ENCODE measurements at regions of chr14 and their contacts with region 1.

Region 1: DNA sequence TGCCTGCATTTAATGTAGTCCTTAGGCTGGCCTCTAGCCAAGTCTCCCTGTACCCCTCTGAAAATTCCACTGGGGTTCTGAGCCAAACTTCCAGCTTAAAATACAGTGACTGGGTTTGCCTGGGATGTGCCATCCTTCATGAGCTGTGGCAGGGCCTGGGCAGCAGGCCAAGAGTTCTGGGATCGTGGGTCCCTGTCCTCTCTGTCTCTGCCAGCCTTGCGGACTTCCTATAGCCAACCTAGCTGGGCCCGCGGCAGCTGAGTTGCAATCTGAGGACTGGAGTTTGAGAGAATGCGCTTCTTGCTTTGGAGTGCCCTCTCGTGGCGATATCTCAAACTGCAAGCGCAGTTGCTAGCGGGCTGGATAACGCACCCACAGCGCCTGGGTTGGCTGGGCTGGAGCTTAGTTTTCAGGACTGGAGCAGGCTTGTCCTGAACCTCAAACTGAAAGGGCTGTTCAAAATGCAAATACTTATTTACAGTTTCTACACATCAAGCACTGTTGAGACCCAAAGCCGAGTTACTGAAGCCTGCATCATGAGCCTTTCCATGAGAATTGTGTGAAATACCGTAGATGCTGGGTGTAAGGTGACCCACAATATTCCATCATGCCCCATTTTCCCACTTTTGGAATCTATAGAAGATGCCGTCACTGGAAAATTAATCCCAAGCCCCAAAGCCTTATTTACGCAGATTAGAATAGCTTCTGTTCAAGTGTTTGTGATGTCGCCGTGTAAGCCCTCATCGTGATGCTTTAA is 7.3 kb upstream of the IFI27L2 start:
- DNase-seq: peak; percentile 92

Region 2: DNA sequence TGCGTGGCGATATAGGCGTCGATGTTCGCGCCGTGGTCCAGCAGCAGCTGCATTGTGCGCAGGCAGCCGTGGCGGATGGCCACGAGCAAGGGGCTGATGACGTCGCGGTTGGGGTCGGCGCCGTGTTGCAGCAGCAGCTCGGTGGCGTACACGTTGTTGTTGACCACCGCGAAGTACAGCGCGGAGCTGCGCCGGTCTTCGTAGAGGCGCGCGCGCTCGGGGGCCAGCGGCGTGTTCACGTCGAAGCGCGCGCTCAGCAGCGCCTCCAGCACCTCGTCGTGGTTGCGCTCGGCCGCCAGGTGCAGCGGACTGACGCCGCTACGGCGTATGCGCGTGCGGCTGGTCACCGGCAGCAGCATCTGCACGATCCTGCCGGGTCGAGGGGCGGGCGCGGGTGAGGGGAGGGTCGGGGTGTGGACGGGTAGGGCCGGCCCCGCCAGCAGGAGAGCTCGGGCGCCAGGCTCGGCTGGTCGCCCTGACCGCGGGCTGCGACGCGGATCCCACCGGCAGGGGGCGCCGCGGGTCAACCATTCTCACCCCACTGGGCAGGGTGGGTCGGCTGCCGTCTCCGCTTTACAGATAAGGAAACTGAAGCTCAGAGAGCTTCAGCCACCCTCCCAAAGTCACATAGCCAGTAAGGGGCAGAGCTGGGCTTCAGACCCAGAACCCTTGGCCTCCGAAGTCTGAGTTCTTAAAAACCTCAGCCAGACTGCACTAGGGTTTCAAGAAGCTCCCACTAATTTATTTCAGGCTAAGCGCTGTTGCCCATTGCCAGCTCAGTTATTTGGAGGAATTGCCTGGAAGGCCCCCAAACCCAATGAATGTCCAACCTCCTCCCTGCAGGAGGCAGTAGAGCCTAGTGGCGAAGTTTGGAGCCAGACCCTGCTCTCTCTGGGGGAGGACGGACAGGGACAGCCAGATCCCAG is 197.2 kb before region 1 on chr14:
- intact Hi-C with region 1: loop called (anchors 2 kb)
- DNase-seq: peak; percentile 85

Region 3: DNA sequence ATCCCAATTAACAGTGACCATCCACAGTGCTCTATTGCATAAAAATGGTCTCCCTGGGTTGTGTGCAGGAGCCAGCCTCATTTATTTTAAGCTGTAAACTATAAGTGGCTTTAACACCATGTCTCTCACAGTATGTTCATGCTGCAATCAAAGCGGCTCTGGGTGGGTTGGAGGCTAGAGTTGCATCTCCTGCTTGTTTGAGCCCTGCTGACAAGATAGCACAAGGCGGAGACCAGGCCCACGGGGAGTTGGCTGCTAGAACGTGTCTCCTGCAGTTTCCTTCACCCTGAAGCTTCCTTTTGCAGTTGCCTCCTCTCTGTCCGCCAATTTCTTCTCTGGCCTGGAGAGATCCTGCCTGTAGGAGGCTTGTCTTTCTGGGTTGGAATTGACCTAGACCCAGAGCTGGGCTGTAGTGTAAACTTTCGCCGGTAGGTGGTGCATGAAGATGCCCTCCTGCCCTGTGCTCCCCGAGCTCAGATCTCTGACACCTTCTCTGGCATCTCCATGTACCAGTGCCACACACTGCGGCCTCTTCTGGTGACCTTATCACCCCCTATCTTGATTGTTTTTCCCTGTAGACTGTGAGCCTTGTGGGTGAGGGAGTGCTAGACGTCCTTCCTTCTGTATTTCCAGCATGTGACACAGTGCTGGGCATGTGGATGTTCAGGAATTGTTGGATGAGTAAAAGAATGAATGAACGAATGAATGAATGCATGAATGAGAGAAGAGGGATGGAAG is 100.3 kb before region 1 on chr14:
- intact Hi-C with region 1: loop called (anchors 1 kb)
- DNase-seq: no peak

Region 4: DNA sequence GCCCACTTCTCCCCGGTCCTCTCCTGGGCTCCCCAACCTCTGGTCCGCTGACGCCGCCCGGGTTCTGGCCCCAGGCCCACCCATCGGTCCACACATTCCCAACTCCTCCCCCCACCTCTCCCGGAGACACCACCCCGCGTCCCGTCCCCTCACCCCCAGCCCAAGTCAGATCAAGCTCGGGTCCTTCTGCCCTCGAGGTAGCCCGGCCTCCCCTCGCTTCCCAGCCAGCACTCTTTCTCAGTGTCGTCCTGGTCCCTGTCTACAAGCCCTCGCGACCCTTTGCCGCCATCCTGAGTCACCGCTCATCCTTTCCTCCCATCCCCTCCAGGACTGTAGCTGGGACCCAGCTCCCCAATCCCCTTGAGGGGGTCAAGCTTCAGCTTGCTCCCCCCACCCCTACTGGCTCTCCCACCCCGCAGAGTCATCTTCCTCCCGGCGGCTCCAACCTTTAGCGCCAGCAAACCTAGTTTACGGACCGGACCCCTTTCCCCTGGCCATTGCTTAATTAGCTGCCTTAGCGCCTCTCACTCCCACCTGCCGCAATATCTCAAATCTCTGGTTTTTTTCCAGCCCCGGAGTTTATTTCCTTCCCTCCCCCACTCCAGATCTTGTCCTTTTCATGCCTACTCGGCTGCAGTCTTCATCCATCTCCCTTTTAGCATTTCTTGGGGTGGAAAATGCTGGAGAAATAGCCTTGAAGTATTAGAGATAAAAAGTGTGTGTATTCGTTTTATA is 38.4 kb after region 1 on chr14:
- intact Hi-C with region 1: loop called (anchors 5 kb)
- DNase-seq: no peak

Measured in cardiac septum (tissue), 1 donor.